ENCODE measurements at regions of chr9 and their contacts with region 1.

Region 1: DNA sequence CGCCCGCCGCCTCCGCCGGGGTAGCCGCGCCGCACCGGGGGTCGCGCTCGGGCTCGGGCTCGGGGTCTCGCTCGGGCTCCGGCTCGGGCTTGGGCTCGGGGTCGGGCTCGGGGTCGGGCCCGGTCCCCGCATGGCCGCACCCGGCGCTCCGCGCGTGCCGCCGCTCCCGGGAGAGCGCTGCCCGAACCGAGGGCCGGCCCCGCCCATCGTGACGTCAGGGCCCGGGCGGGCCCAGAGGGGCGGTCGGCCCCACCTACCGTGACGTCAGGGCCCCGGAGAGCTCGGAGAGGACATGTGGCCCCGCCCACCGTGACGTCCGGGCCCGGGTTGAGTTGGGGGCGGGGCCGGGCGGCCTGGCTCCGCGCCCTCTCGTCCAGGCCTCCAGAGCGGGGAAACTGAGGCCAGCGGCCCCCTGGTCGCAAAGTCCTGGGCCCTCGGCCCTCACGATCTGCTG is at the start of gene NSMF:
- DNase-seq: peak; percentile 95
- H3K4me3 Mint-ChIP-seq: peak within 1 kb of the TSS; percentile 7
- H3K27ac Mint-ChIP-seq: peak within 1 kb of the TSS; percentile 65
- H3K4me1 Mint-ChIP-seq: peaks cover 10% of the 10 kb centered on the region
- H3K27me3 Mint-ChIP-seq: no peaks in the 10 kb centered on the region
- total RNA-seq, gene NSMF: 57.2 and 58.9 TPM in 2 replicates

Region 2: GRCh38 chr9:136807281-136808074 is 651.7 kb before region 1 on chr9 and contains the start of gene RABL6:
- intact Hi-C with region 1: loop called (anchors 10 kb)
- DNase-seq: peak; percentile 82
- H3K4me3 Mint-ChIP-seq: peak within 1 kb of the TSS; percentile 85
- H3K27ac Mint-ChIP-seq: peak within 1 kb of the TSS; percentile 90
- H3K4me1 Mint-ChIP-seq: peaks cover 28% of the 10 kb centered on the region
- H3K27me3 Mint-ChIP-seq: peaks cover 4% of the 10 kb centered on the region
- total RNA-seq, gene RABL6: 109 and 114 TPM in 2 replicates

Region 3: DNA sequence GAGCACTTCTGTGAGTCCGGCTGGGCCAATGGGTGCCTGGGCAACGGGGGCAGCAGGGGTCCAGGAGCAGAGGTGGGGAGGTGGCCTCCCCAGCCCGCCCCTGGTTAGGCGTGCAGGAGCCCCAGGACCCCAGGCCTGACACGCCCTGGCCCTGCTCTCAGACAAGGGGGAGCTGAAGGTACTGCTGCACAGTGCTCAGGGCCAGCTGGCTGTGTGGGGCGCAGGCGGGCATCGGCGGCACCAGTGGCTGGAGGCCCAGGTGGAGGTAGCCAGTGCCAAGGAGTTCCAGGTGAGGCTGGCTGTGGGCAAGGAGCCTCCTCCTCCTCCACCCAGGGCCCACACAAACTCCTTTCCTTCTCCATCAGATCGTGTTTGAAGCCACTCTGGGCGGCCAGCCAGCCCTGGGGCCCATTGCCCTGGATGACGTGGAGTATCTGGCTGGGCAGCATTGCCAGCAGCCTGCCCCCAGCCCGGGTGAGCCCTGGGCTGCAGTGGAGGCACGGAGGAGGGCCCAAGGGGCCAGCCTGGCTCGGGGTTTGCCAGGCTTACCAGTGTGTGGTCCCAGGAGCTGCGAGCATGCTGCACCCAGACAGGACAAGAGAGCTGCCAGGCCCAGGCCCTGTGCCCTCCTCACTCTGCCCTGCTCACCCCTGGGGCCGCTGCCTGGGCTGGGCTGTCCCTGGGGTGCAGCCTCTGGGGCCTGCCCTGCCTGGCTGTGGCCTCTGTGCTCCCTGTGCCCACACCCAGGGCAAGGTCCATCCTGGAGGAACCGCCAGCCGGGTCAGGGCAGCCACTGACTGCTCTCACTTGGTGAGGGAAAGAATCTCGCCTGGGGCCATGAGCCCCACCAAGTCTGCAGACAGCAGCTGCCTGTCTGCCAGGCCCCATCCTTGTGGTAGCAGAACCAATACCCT is 600.1 kb before region 1 on chr9:
- intact Hi-C with region 1: no loop called
- DNase-seq: no peak
- H3K4me3 Mint-ChIP-seq: no peak overlapping the region
- H3K27ac Mint-ChIP-seq: no peak overlapping the region
- H3K4me1 Mint-ChIP-seq: peaks cover 7% of the 10 kb centered on the region
- H3K27me3 Mint-ChIP-seq: no peaks in the 10 kb centered on the region

Region 4: DNA sequence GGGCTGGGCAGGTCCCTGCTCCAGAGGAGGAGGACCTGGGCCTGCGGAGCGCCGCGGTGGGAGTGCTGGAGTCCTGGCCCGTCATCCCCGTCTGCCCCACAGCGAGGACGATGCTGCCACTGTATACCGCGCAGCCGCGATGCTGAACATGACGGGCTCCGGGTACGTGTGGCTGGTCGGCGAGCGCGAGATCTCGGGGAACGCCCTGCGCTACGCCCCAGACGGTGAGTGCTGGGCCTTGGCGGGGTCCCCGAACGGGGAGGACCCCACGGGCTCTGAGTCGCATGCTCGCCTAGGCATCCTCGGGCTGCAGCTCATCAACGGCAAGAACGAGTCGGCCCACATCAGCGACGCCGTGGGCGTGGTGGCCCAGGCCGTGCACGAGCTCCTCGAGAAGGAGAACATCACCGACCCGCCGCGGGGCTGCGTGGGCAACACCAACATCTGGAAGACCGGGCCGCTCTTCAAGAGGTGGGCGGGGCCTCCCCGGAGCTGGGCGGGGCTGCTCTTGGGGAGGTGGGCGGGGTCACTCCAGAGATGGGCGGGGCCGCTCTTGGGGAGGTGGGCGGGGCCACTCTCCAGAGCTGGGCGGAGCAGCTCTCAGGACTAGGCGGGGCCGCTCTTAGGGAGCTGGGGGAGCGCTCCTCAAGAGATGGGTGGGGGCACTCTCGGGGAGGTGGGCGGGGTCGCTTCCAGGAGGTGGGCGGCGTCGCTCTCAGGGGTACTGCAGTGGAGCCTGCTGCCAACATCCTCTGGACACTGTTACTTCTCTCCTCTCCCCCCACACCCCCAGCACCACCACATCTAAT is 302.4 kb before region 1 on chr9:
- intact Hi-C with region 1: loop called (anchors 2 kb)
- DNase-seq: peak; percentile 43
- H3K4me3 Mint-ChIP-seq: peak overlapping the region; percentile 21
- H3K27ac Mint-ChIP-seq: no peak overlapping the region
- H3K4me1 Mint-ChIP-seq: no peaks in the 10 kb centered on the region
- H3K27me3 Mint-ChIP-seq: peaks cover 26% of the 10 kb centered on the region

Region 5: GRCh38 chr9:137423004-137423874 is 35.9 kb before region 1 on chr9 and contains the starts of genes EXD3 and NOXA1:
- intact Hi-C with region 1: loop called (anchors 1 kb)
- DNase-seq: peak; percentile 92
- H3K4me3 Mint-ChIP-seq: peak within 1 kb of the TSS; percentile 90
- H3K27ac Mint-ChIP-seq: peak within 1 kb of the TSS; percentile 52
- H3K4me1 Mint-ChIP-seq: peaks cover 7% of the 10 kb centered on the region
- H3K27me3 Mint-ChIP-seq: peaks cover 9% of the 10 kb centered on the region
- total RNA-seq, gene EXD3: 4.8 and 4.9 TPM in 2 replicates
- total RNA-seq, gene NOXA1: 0.49 and 0.54 TPM in 2 replicates

Region 6: GRCh38 chr9:137492464-137493162 is 33.4 kb after region 1 on chr9:
- intact Hi-C with region 1: loop called (anchors 2 kb)
- DNase-seq: peak; percentile 8
- H3K4me3 Mint-ChIP-seq: no peak overlapping the region
- H3K27ac Mint-ChIP-seq: no peak overlapping the region
- H3K4me1 Mint-ChIP-seq: no peaks in the 10 kb centered on the region
- H3K27me3 Mint-ChIP-seq: no peaks in the 10 kb centered on the region

Region 7: GRCh38 chr9:137605121-137606004 is 146.2 kb after region 1 on chr9 and contains the start of gene ARRDC1:
- intact Hi-C with region 1: loop called (anchors 1 kb)
- DNase-seq: peak; percentile 85
- H3K4me3 Mint-ChIP-seq: peak within 1 kb of the TSS; percentile 85
- H3K27ac Mint-ChIP-seq: peak within 1 kb of the TSS; percentile 74
- H3K4me1 Mint-ChIP-seq: peaks cover 20% of the 10 kb centered on the region
- H3K27me3 Mint-ChIP-seq: peaks cover 6% of the 10 kb centered on the region
- total RNA-seq, gene ARRDC1: 65.7 and 70.3 TPM in 2 replicates